ENCODE measurements at regions of chr9 and their contacts with region 1.

Region 1: GRCh38 chr9:83334320-83334719 is 203.9 kb downstream of the FRMD3 start:
- DNase-seq: peak; percentile 84 to 85
- ATAC-seq: peak; percentile 79 to 94 (median 92)
- H3K4me3 ChIP-seq: no peak overlapping the region
- H3K27ac ChIP-seq: no peak overlapping the region
- H3K4me1 ChIP-seq: peaks cover 0 to 6% (median 0%) of the 10 kb centered on the region in 9 donors
- H3K27me3 ChIP-seq: no peaks in the 10 kb centered on the region
- CTCF ChIP-seq: peak; percentile 90 to 98 (median 95)

Region 2: GRCh38 chr9:83199243-83199642 is 135.1 kb before region 1 on chr9:
- intact Hi-C with region 1: loop called in 2 of 10 experiments (anchors 10 kb)
- DNase-seq: peak in 1 of 2 donors; percentile 51
- ATAC-seq: peak; percentile 85 to 94 (median 90)
- H3K4me3 ChIP-seq: no peak overlapping the region
- H3K27ac ChIP-seq: no peak overlapping the region
- H3K4me1 ChIP-seq: peaks cover 0 to 9% (median 0%) of the 10 kb centered on the region in 9 donors
- H3K27me3 ChIP-seq: peaks cover 0 to 21% (median 7%) of the 10 kb centered on the region in 7 donors
- CTCF ChIP-seq: peak; percentile 14 to 80 (median 64)

Region 3: DNA sequence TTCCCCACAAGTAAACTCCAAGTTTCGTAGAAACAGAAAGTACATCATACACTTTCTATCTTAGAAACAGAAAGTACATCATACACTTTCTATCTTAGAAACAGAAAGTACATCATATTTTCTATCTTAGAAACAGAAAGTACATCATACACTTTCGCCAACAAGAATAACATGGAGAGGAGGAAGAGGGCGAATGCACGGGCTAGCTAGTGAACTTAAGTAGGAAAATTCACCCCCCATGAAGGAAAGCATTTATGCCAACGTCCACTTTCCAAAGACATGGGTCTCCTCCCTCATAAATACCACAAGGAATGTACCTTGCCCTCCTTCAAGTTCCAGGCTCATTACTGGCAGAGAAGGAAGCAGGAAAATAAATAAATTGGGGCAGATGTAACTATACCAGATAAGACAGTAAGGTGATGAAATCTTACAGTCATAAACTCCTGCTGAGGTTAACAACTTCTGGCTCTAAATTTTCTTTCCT is 139.2 kb after region 1 on chr9:
- intact Hi-C with region 1: loop called in 2 of 10 experiments (anchors 5 to 10 kb)
- DNase-seq: no peak
- ATAC-seq: peak in 3 of 8 donors; percentile 31 to 43 (median 43)
- H3K4me3 ChIP-seq: peak overlapping the region in 6 of 10 donors; percentile 16 to 31 (median 23)
- H3K27ac ChIP-seq: peak overlapping the region in 9 of 10 donors; percentile 25 to 85 (median 74)
- H3K4me1 ChIP-seq: peaks cover 0 to 52% (median 35%) of the 10 kb centered on the region in 9 donors
- H3K27me3 ChIP-seq: no peaks in the 10 kb centered on the region
- CTCF ChIP-seq: no peak

Region 4: GRCh38 chr9:83538172-83538889 is 204.0 kb after region 1 on chr9 and contains the start of gene FRMD3:
- intact Hi-C with region 1: loop called in 6 of 10 experiments (anchors 1 to 5 kb)
- DNase-seq: peak; percentile 88 to 91
- ATAC-seq: peak; percentile 91 to 99 (median 96)
- H3K4me3 ChIP-seq: peak within 1 kb of the TSS; percentile 62 to 87 (median 72)
- H3K27ac ChIP-seq: peak within 1 kb of the TSS; percentile 78 to 89 (median 84)
- H3K4me1 ChIP-seq: peaks cover 3 to 24% (median 21%) of the 10 kb centered on the region in 9 donors
- H3K27me3 ChIP-seq: peaks cover 0 to 17% (median 0%) of the 10 kb centered on the region in 7 donors
- CTCF ChIP-seq: peak; percentile 70 to 97 (median 84)
- total RNA-seq, gene FRMD3: 60.5 to 145 (median 113) TPM

Region 5: GRCh38 chr9:83544002-83544698 is 209.8 kb after region 1 on chr9:
- intact Hi-C with region 1: loop called in 9 of 10 experiments (anchors 2 to 5 kb)
- DNase-seq: peak; percentile 36 to 39
- ATAC-seq: peak; percentile 83 to 94 (median 87)
- H3K4me3 ChIP-seq: no peak overlapping the region
- H3K27ac ChIP-seq: no peak overlapping the region
- H3K4me1 ChIP-seq: peaks cover 0 to 15% (median 5%) of the 10 kb centered on the region in 9 donors
- H3K27me3 ChIP-seq: no peaks in the 10 kb centered on the region
- CTCF ChIP-seq: peak; percentile 59 to 82 (median 78)

Region 6: GRCh38 chr9:83596896-83597504 is 262.7 kb after region 1 on chr9:
- intact Hi-C with region 1: loop called in 3 of 10 experiments (anchors 5 kb)
- DNase-seq: peak in 1 of 2 donors; percentile 32
- ATAC-seq: peak in 2 of 8 donors; percentile 42 to 55
- H3K4me3 ChIP-seq: no peak overlapping the region
- H3K27ac ChIP-seq: no peak overlapping the region
- H3K4me1 ChIP-seq: peaks cover 0 to 11% (median 0%) of the 10 kb centered on the region in 9 donors
- H3K27me3 ChIP-seq: no peaks in the 10 kb centered on the region
- CTCF ChIP-seq: peak; percentile 51 to 80 (median 66)

Region 7: DNA sequence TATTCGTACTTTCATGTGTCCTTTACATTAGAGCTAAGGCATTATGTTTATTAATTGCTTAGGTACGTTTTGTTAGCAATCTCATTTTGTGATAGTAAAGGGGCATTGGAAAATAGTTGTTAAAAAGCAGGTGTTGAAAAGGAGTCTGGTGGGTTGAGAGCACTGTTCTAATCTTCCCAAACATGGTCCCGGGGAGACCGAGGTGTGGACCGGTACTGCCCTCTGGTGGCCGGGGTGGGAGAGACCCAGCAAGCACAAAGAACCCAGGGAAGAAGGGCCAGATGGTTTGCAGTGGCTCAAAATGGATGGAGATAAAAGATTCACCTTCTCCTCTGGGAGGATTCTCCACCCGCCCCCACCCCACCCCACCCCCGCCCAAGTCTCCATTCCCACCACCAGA is 314.8 kb after region 1 on chr9:
- intact Hi-C with region 1: loop called in 2 of 10 experiments (anchors 10 kb)
- DNase-seq: peak; percentile 58 to 75
- ATAC-seq: peak; percentile 65 to 89 (median 82)
- H3K4me3 ChIP-seq: no peak overlapping the region
- H3K27ac ChIP-seq: peak overlapping the region in 1 of 10 donors; percentile 37
- H3K4me1 ChIP-seq: peaks cover 0 to 11% (median 0%) of the 10 kb centered on the region in 9 donors
- H3K27me3 ChIP-seq: no peaks in the 10 kb centered on the region
- CTCF ChIP-seq: peak; percentile 54 to 78 (median 76)